Right cardiac atrium (tissue), 5 donors: ENCODE measurements at regions of chr16 and their contacts with region 1.

Region 1: GRCh38 chr16:52068447-52069074 is 478.4 kb downstream of the TOX3 start:
- DNase-seq: no peak
- ATAC-seq: peak; percentile 53 to 78
- H3K4me3 ChIP-seq: no peak overlapping the region
- H3K27ac ChIP-seq: no peak overlapping the region
- H3K4me1 ChIP-seq: no peaks in the 10 kb centered on the region
- H3K27me3 ChIP-seq: no peaks in the 10 kb centered on the region

Region 2: DNA sequence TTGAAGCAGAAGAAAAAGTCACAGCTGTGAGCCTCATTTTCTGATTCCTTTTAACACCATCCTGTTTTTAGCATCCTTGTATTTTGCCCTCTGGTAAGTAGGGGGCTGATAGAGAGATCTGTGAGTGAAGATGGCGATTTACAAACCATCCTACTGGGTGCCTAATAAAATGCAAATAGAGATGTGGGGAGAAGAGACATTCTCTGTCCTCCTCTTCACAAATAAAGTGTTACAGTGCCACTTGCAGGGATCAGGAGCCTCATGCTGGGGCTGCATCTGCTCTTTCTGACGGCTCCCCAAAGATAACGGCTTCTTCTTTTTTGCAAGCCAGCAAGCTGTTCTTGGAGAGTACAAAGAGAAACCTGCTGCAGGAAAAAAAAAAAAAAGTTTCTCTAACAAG is 59.8 kb after region 1 on chr16:
- intact Hi-C with region 1: no loop called
- DNase-seq: no peak
- ATAC-seq: no peak
- H3K4me3 ChIP-seq: no peak overlapping the region
- H3K27ac ChIP-seq: no peak overlapping the region
- H3K4me1 ChIP-seq: no peaks in the 10 kb centered on the region
- H3K27me3 ChIP-seq: no peaks in the 10 kb centered on the region

Region 3: DNA sequence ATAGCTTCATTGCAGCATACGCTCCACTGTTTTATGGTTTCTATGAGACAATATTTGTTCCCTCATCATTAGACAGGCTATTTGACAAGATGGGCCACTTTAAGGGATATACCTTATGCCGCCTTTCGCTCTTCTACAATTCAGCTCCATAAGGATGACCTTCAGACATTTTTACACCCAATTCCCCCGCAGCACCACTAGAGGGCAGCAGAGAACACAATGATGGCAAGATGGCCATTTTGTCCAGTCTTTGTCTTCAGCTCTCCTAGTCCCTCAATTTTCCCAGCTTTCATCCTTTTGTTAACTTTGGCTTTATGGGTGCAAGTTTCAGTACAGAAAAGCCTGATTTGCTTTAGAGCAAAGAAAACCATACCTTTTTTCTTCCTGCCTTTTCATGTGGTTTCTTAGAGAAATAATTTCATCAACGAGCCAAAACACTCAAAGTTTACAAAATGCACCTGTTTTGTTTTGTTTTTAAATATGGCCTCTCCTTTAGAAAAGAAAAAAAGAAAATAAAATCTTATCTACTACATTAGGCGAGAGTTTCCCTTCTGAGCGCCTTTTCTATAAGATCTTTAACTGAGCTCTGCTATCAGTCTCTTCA is 123.1 kb after region 1 on chr16:
- intact Hi-C with region 1: loop called in 1 of 4 experiments (anchors 5 kb)
- DNase-seq: peak; percentile 25 to 75 (median 70)
- ATAC-seq: peak; percentile 43 to 60
- H3K4me3 ChIP-seq: no peak overlapping the region
- H3K27ac ChIP-seq: no peak overlapping the region
- H3K4me1 ChIP-seq: no peaks in the 10 kb centered on the region
- H3K27me3 ChIP-seq: no peaks in the 10 kb centered on the region

Region 4: DNA sequence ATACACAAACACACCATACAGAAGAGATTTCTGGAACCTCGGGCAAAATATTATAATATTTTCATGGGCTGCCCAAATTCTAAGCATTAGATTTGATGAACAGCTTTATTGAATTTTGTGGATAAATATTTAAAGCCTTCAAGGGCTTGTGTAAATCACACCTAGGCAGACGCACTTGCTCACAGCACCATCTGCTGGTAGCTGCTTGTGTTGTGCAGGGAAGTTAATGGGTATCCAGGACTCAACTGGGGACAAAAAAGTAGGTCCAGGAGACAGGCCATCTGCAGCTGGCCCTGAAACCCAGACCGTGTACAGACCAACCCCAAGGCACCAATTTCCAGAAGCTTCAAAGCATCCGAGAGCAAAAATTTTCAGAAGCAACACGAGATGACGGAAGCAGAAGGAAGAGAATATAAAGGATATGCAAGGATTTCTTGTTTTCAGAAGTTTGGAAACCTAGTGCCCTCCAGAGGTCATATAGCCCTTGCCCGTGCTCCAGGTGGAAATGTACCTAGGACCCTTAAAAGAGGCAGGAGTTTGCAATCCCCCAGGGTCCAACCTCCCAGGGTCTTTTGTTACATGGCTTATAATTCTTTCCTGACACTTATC is 844.1 kb after region 1 on chr16:
- intact Hi-C with region 1: loop called in 2 of 4 experiments (anchors 5 to 10 kb)
- DNase-seq: peak; percentile 55 to 71 (median 62)
- ATAC-seq: peak; percentile 55 to 63
- H3K4me3 ChIP-seq: no peak overlapping the region
- H3K27ac ChIP-seq: no peak overlapping the region
- H3K4me1 ChIP-seq: no peaks in the 10 kb centered on the region
- H3K27me3 ChIP-seq: no peaks in the 10 kb centered on the region

Region 5: DNA sequence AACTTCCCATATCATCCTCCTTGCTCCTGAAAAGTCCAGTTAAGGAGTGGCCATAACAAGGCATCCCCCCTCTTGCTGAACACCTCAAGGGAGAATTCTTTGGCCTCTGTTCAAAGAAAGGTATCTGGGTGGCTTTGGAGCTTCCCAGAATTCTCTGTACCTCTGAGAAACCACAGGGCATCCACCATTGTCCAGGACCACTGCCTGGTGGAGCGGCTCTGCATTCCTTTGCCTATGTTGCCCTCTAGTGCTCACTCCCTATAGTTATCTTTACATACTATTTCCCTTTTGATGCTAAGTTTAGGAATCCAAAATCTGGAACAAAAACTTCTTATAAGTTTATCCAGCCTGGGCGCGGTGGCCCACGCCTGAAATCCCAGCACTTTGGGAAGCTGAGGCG is 953.8 kb after region 1 on chr16:
- intact Hi-C with region 1: loop called in 2 of 4 experiments (anchors 5 kb)
- DNase-seq: peak; percentile 25 to 47 (median 46)
- ATAC-seq: peak; percentile 70 to 91
- H3K4me3 ChIP-seq: no peak overlapping the region
- H3K27ac ChIP-seq: no peak overlapping the region
- H3K4me1 ChIP-seq: no peaks in the 10 kb centered on the region
- H3K27me3 ChIP-seq: no peaks in the 10 kb centered on the region